H1 (cell line): ENCODE measurements at regions of chr20 and their contacts with region 1.

Region 1: DNA sequence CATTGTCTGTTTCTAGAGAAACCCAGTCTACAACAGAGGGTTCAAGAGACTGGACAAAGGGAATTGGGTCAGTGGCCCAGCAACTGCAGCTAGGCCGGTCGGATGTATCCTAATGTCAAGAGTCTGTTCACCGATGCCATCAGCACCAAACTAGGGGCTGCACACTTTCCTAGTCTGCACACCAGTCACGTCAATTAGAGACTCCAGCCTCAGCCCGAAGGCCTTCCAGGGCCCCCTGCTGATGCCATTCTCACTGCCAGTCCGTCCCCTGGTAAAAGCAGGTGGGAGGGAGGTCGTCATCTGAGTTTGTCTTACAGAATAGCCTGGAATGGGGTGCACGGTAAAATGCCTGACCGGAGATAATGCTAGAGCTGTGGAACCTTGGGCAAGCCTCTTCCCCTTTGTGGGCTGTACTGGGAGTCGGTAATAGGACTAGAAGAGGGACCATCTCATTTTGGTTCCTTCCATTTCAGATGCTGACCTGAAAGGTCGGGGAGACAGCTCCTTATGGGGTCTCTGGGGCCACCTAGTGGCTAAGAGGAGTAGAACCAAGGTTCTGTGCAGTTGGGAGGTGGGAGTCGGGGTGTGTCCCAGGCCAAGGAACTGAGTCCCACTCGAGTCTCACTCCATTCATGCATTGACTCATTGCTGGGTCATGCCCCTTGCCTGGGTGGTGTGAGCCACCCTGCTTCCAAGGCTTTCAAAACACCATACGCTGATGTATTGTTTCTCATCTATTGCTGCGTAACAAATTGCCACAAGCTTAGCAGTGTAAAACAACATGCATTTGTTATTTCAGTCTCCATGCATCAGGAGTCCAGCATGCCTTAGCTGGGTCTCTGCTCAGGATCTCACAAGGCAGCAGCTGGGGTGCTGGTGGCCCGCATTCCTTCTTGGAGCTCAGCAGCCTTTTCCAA is 5.1 kb downstream of the SOX12 start:
- DNase-seq: peak in 1 of 2 experiments; percentile 66
- H3K4me3 ChIP-seq: peak overlapping the region in 1 of 4 experiments; percentile 14; a peak in 1 of 8 replicates
- H3K27ac ChIP-seq: no peak overlapping the region
- H3K4me1 ChIP-seq: peaks cover 11 to 26% (median 16%) of the 10 kb centered on the region in 4 experiments
- H3K27me3 ChIP-seq: peaks cover 0 to 4% (median 0%) of the 10 kb centered on the region in 4 experiments; a peak in 1 of 7 replicates
- CTCF ChIP-seq: peak; percentile 86 to 90 (median 90)
- EP300 ChIP-seq: 0 out of 3 replicates have a peak, but pooled peaks of 1 of the 2 experiments have one; percentile 21
- POLR2A ChIP-seq: no peak
- RAD21 ChIP-seq: peak; percentile 87 to 94

Region 2: DNA sequence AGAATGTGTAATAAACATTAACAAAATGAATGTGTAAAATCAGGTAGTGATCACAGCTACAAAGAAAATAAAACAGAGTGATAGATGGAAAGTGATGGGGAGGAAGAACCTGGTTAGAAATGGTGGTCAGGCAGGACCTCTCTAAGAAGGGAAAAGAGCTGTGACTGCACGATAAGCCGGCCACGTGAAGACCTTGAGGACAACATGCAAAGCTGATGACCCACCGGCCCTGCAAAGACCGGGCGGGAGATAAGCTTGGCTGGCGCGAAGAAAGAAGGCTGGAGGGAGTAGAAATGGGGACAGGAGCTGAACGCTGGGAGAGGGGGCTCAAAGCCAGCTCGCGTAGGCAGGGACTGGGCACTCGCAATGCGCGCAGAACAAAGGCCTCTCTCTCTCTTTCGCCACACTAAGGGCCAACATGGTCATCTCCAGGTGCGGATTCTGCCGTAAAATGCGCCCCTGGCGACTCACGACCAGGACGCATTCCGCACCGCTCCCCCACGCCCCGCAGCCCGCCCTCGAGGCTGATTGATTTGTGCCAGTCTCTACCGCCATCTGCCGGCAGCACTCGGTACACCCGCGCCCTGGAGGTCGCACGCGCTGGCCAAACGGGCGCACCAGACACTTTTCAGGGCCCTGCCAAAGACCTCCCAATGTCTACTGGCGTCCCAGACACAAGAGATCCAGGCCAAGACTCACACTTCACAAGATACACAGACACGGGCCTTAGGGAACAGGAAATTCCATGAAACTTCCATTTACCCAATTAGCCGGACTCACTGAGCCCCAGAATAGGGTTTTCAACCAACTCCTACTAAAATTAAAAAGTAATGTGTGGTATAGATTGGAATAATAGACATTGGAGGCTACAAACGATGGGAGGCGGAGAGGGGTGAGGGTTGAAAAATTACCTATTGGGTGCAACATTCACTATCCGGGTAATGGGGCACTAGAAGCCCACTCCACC is 63.6 kb before region 1 on chr20:
- CTCF ChIA-PET with region 1: interaction called, 45 read pairs
- POLR2A ChIA-PET with region 1: interaction called, 9 read pairs
- DNase-seq: peak; percentile 84 to 99
- H3K4me3 ChIP-seq: peak overlapping the region; percentile 4 to 53 (median 31); a peak in 6 of 8 replicates
- H3K27ac ChIP-seq: no peak overlapping the region
- H3K4me1 ChIP-seq: 0 out of 7 replicates have a peak, but pooled peaks cover 0 to 2% (median 0%) of the 10 kb centered on the region in 4 experiments
- H3K27me3 ChIP-seq: peaks cover 0 to 26% (median 11%) of the 10 kb centered on the region in 4 experiments; a peak in 6 of 7 replicates
- CTCF ChIP-seq: peak; percentile 96 to 98 (median 97)
- EP300 ChIP-seq: no peak
- POLR2A ChIP-seq: peak in 1 of 2 experiments; percentile 94; a peak in 2 of 3 replicates
- RAD21 ChIP-seq: peak; percentile 95

Region 3: GRCh38 chr20:297098-297924 is 33.2 kb before region 1 on chr20 and contains the start of gene ZCCHC3:
- CTCF ChIA-PET with region 1: interaction called, 36 read pairs
- POLR2A ChIA-PET with region 1: interaction called, 85 read pairs
- DNase-seq: peak; percentile 80 to 88
- H3K4me3 ChIP-seq: peak within 1 kb of the TSS; percentile 69 to 99 (median 96)
- H3K27ac ChIP-seq: peak within 1 kb of the TSS; percentile 90
- H3K4me1 ChIP-seq: peaks cover 12 to 22% (median 14%) of the 10 kb centered on the region in 4 experiments
- H3K27me3 ChIP-seq: peaks cover 0 to 7% (median 1%) of the 10 kb centered on the region in 4 experiments; a peak in 2 of 7 replicates
- CTCF ChIP-seq: peak in 2 of 3 experiments; percentile 4 to 18; a peak in 2 of 4 replicates
- EP300 ChIP-seq: no peak; a peak in 1 of 3 replicates
- POLR2A ChIP-seq: peak; percentile 71 to 77; a peak in 2 of 3 replicates
- RAD21 ChIP-seq: peak in 1 of 2 experiments; percentile 36; a peak in 2 of 4 replicates
- total RNA-seq, gene ZCCHC3: 52.4 and 54.0 TPM in 2 replicates

Region 4: GRCh38 chr20:341682-342081 is 11.2 kb after region 1 on chr20:
- CTCF ChIA-PET with region 1: interaction called, 33 read pairs
- POLR2A ChIA-PET with region 1: interaction called, 36 read pairs
- DNase-seq: no peak
- H3K4me3 ChIP-seq: no peak overlapping the region
- H3K27ac ChIP-seq: no peak overlapping the region
- H3K4me1 ChIP-seq: peaks cover 0 to 4% (median 4%) of the 10 kb centered on the region in 4 experiments; a peak in 4 of 7 replicates
- H3K27me3 ChIP-seq: peaks cover 0 to 5% (median 0%) of the 10 kb centered on the region in 4 experiments; a peak in 3 of 7 replicates
- CTCF ChIP-seq: no peak
- EP300 ChIP-seq: no peak
- POLR2A ChIP-seq: no peak
- RAD21 ChIP-seq: no peak

Region 5: DNA sequence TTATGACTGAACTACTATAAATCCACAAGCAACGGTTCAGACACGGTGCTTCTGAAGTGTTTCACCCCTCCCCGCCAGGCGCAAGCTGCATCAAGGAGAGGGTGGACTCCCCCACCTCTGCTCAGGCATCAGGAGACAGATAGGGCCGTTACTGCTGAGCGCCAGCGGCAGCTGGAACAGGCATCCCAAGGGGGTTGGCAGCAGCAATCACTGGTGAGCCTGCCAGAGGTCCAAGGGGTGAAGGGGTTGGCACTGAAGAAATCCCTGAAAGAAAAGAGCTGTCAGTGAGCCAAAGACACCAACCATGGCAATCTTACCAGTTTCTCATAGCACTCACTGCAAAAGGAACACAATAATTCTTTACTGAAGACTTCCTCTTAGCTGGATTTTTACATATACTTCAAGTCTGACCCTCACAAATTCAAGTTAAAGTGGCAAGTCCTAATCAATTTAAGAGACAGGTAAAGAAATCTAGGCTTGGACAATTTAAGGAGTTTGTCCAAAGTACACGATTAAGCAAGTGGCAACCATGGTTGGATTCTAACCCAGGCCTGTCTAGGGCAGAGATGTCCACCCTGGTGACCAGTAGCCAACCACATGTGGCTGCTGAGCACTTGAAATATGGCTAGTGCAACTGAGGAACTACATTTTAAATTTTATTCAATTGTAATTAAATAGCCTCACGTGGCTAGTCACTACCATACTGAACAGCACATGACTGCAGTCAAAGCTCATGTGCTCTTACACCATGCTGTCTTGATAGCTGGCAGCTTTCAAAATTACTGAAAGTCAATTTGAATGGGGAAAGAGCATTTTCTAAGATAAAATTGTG is 153.5 kb after region 1 on chr20:
- CTCF ChIA-PET with region 1: no interaction called
- POLR2A ChIA-PET with region 1: no interaction called
- DNase-seq: no peak
- H3K4me3 ChIP-seq: no peak overlapping the region
- H3K27ac ChIP-seq: no peak overlapping the region
- H3K4me1 ChIP-seq: no peaks in the 10 kb centered on the region
- H3K27me3 ChIP-seq: no peaks in the 10 kb centered on the region
- CTCF ChIP-seq: no peak
- EP300 ChIP-seq: no peak
- POLR2A ChIP-seq: no peak
- RAD21 ChIP-seq: no peak